Dorsolateral prefrontal cortex (tissue), 120 donors: ENCODE measurements at regions of chr9 and their contacts with region 1.

Region 1: GRCh38 chr9:16191691-16192402 is 639.0 kb downstream of the CCDC171 start:
- DNase-seq: peak in 8 of 10 donors; percentile 23 to 65 (median 52)
- H3K4me3 ChIP-seq: peak overlapping the region in 1 of 59 donors; percentile 4
- H3K27ac ChIP-seq: no peak overlapping the region
- H3K27me3 ChIP-seq: peaks cover 0 to 6% (median 0%) of the 10 kb centered on the region in 45 donors
- CTCF ChIP-seq: peak; percentile 19 to 76 (median 60)

Region 2: DNA sequence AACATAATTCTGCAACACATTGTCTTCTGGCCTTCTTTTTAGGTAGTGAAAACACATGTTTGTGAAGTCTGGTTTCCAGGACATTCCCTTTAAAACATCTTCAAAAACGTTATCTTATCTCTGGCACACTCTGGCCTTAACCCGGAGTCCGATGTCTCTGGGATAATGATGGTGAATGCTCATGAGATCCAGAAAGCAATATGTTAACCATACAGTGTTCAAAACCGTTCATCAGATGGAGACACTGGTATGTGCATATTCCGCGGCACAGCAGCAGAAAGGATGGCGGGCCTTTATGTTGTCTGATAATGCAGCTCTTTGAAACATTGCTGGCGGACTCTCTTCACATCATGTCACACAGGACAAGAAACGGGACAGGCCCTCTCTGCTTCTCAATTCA is 33.8 kb before region 1 on chr9:
- intact Hi-C with region 1: no loop called
- DNase-seq: no peak
- H3K4me3 ChIP-seq: no peak overlapping the region
- H3K27ac ChIP-seq: no peak overlapping the region
- H3K27me3 ChIP-seq: peaks cover 0 to 28% (median 3%) of the 10 kb centered on the region in 45 donors
- CTCF ChIP-seq: no peak

Region 3: DNA sequence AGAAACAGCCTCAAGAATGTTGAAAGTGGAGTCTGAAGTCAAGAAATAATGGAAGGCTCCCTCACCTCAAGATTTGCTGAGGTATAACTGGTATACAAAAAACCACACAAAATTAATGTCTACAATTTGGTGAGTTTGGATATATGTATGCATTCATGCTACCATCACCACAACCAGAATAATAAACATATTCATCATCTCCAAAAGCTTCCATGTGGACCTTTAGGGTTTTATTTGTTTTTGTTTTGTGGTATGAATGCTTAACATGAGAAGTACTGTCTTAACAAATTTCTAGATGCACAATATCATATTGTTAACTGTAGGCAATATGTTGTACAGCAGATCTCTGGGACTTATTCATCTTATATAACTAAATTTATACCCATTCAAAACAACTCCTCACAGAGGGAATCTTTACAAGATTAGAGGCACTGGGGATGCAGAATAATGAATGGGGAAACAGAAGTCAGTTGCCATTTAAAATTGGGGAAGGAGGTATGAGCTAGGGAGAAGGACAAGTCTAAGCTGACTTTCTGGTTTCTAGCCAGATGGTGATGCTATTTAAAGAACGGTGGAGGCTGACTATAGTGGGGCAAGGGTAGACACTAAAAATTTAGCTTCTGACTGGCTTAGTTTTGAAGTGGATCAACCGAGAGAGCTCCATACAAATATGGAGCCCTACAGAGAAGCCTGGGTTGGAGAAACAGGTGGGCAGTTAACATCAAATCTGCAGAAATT is 464.8 kb after region 1 on chr9:
- intact Hi-C with region 1: loop called in 1 of 2 experiments (anchors 5 kb)
- DNase-seq: no peak
- H3K4me3 ChIP-seq: no peak overlapping the region
- H3K27ac ChIP-seq: no peak overlapping the region
- H3K27me3 ChIP-seq: peaks cover 0 to 5% (median 0%) of the 10 kb centered on the region in 45 donors
- CTCF ChIP-seq: no peak